Activated T-helper 1 cell treated with anti-CD3 and anti-CD28 coated beads, Interleukin-12 subunit alpha, Interleukin-12 subunit beta, Interleukin-2, Interleukin-4 antibody, amounts not matched to agents 30 ng/mL and 10 ng/mL and 1 ng/mL, durations not matched to agents 14 hours and 24 hours and 36 hours (primary cell): ENCODE measurements at regions of chrX and their contacts with region 1.

Region 1: DNA sequence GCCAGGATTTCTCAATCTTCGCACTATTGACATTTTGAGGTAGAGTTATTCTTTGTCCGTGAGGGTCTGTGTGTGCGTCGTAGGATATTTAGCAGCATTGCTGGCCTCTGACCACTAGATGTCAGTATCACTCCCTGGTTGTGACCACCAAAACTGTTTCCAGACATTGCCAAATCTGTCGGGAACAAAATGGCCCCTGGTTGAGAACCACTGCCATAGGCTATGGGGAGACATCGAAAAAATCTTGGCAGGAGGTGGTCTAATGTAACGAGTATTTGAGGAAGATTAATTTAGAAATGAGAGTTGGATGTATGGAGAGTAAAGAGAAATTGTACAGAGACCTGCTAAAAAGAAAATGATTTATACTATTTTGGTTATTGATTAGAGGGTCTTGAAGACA is 108.4 kb downstream of the DOCK11 start:
- DNase-seq: peak; percentile 0
- H3K4me3 Mint-ChIP-seq: no peak overlapping the region
- H3K27ac Mint-ChIP-seq: no peak overlapping the region
- H3K4me1 Mint-ChIP-seq: peaks cover 10% of the 10 kb centered on the region
- H3K27me3 Mint-ChIP-seq: no peaks in the 10 kb centered on the region

Region 2: DNA sequence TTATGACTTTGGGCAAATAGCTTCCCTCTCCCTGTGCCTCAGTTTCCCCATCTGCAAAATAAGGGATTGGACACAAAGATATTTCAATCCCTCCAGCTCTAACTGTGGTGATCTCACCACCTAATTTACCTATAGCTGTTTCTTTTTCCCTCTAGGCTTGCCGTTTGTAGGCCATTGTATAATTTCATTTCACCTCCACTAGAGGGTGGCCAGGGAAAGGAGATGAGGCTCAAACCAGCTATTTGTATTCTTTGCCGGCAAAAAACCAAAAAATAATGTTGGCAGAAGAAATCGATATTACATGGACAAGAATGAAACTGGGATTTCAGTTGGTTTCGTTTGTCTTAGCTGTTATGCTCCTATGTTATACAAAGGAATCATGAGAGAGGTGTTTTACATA is 144.5 kb before region 1 on chrX:
- intact Hi-C with region 1: loop called (anchors 1 kb)
- DNase-seq: no peak
- H3K4me3 Mint-ChIP-seq: no peak overlapping the region
- H3K27ac Mint-ChIP-seq: no peak overlapping the region
- H3K4me1 Mint-ChIP-seq: no peaks in the 10 kb centered on the region
- H3K27me3 Mint-ChIP-seq: peaks cover 5% of the 10 kb centered on the region

Region 3: GRCh38 chrX:118495061-118495921 is 108.7 kb before region 1 on chrX and contains the start of gene DOCK11:
- intact Hi-C with region 1: loop called (anchors 2 kb)
- DNase-seq: peak; percentile 75
- H3K4me3 Mint-ChIP-seq: peak within 1 kb of the TSS; percentile 98
- H3K27ac Mint-ChIP-seq: peak within 1 kb of the TSS; percentile 97
- H3K4me1 Mint-ChIP-seq: peaks cover 30% of the 10 kb centered on the region
- H3K27me3 Mint-ChIP-seq: no peaks in the 10 kb centered on the region
- total RNA-seq, gene DOCK11: 28.6 and 30.1 TPM in 2 replicates

Region 4: GRCh38 chrX:118520216-118521206 is 83.5 kb before region 1 on chrX:
- intact Hi-C with region 1: no loop called
- DNase-seq: no peak
- H3K4me3 Mint-ChIP-seq: no peak overlapping the region
- H3K27ac Mint-ChIP-seq: no peak overlapping the region
- H3K4me1 Mint-ChIP-seq: peaks cover 54% of the 10 kb centered on the region
- H3K27me3 Mint-ChIP-seq: no peaks in the 10 kb centered on the region

Region 5: GRCh38 chrX:118807151-118808017 is 203.4 kb after region 1 on chrX:
- intact Hi-C with region 1: loop called (anchors 1 kb)
- DNase-seq: no peak
- H3K4me3 Mint-ChIP-seq: no peak overlapping the region
- H3K27ac Mint-ChIP-seq: no peak overlapping the region
- H3K4me1 Mint-ChIP-seq: no peaks in the 10 kb centered on the region
- H3K27me3 Mint-ChIP-seq: peaks cover 11% of the 10 kb centered on the region